ENCODE measurements at regions of chr19 and their contacts with region 1.

Region 1: GRCh38 chr19:8334458-8335342 is 8.4 kb downstream of the KANK3 start:
- DNase-seq: peak; percentile 76 to 84
- ATAC-seq: peak; percentile 77 to 83
- H3K4me3 ChIP-seq: peak overlapping the region; percentile 56
- H3K27ac ChIP-seq: peak overlapping the region; percentile 89 to 95
- H3K4me1 ChIP-seq: peaks cover 7% of the 10 kb centered on the region; the same call in 2 of the 3 replicates
- CTCF ChIP-seq: no peak
- EP300 ChIP-seq: no peak
- POLR2A ChIP-seq: peak; percentile 30; the same call in 1 of the 2 replicates
- RAD21 ChIP-seq: no peak

Region 2: GRCh38 chr19:8262431-8262830 is 72.3 kb before region 1 on chr19:
- CTCF ChIA-PET with region 1: interaction called, 10 read pairs
- POLR2A ChIA-PET with region 1: no interaction called
- DNase-seq: no peak
- ATAC-seq: no peak
- H3K4me3 ChIP-seq: no peak overlapping the region
- H3K27ac ChIP-seq: no peak overlapping the region
- H3K4me1 ChIP-seq: no peaks in the 10 kb centered on the region
- CTCF ChIP-seq: no peak
- EP300 ChIP-seq: no peak
- POLR2A ChIP-seq: no peak
- RAD21 ChIP-seq: no peak

Region 3: GRCh38 chr19:8321060-8321985 is 13.4 kb before region 1 on chr19 and contains the starts of genes NDUFA7 and RPS28:
- CTCF ChIA-PET with region 1: interaction called, 14 read pairs
- POLR2A ChIA-PET with region 1: interaction called, 20 read pairs
- DNase-seq: peak; percentile 50 to 92
- ATAC-seq: peak; percentile 80 to 89
- H3K4me3 ChIP-seq: peak within 1 kb of the TSS; percentile 100
- H3K27ac ChIP-seq: peak within 1 kb of the TSS; percentile 95 to 99
- H3K4me1 ChIP-seq: peaks cover 22% of the 10 kb centered on the region
- CTCF ChIP-seq: no peak
- EP300 ChIP-seq: no peak
- POLR2A ChIP-seq: peak; percentile 81
- RAD21 ChIP-seq: 0 out of 5 replicates have a peak, but pooled peaks of 1 of the 2 experiments have one; percentile 24
- polyA plus RNA-seq, gene NDUFA7: 29.7 and 44.5 TPM in 2 replicates
- polyA plus RNA-seq, gene RPS28: 374 and 406 TPM in 2 replicates

Measured in A549 (cell line).